Activated CD8-positive, alpha-beta T cell treated with anti-CD3 and anti-CD28 coated beads for 36 hours (primary cell): ENCODE measurements at regions of chr5 and their contacts with region 1.

Region 1: DNA sequence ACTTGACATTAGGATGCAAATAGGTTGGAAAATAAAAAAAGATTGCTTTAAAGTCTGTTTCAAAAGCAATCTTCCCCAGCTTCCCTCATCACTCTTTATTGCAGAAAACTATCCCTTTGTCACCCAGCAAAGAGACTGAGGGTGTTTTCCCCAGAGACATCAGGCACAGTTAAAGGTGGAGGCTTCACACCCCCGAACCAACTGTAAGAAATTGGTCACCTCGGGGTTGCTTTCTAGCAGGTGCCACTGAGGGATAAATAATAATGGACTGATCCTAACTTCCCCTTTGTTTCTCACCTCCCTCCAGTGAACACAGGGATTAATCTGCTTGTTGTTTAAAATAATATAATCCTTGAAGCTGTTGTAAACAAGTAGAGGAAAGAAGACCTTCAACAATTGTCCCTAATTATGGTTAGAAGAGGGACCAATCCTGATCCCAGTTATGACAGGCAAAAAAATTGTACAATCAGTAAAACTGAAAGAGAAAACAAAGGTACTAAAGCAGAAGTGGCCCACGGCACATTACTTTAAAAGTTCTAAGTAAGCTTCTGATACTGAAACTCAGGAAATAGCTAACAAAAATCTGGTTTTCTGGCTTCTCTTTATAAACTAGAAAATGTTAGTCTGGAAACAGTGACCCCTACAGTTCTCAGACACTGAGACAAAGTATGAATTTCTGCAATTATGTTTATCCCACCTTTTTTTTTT is 6.6 kb upstream of the PCSK1 start:
- DNase-seq: peak; percentile 8
- ATAC-seq: peak; percentile 53
- H3K4me3 Mint-ChIP-seq: no peak overlapping the region
- H3K27ac Mint-ChIP-seq: no peak overlapping the region
- H3K4me1 Mint-ChIP-seq: peaks cover 6% of the 10 kb centered on the region
- H3K27me3 Mint-ChIP-seq: peaks cover 30% of the 10 kb centered on the region
- CTCF ChIP-seq: no peak

Region 2: GRCh38 chr5:96344678-96345577 is 94.7 kb before region 1 on chr5:
- CTCF ChIA-PET with region 1: interaction called, 6 read pairs
- POLR2A ChIA-PET with region 1: no interaction called
- intact Hi-C with region 1: loop called (anchors 5 kb)
- DNase-seq: peak; percentile 18
- ATAC-seq: peak; percentile 89
- H3K4me3 Mint-ChIP-seq: no peak overlapping the region
- H3K27ac Mint-ChIP-seq: no peak overlapping the region
- H3K4me1 Mint-ChIP-seq: peaks cover 14% of the 10 kb centered on the region
- H3K27me3 Mint-ChIP-seq: peaks cover 17% of the 10 kb centered on the region
- CTCF ChIP-seq: peak; percentile 56